Ovary (tissue), 10 donors: ENCODE measurements at regions of chr3 and their contacts with region 1.

Region 1: DNA sequence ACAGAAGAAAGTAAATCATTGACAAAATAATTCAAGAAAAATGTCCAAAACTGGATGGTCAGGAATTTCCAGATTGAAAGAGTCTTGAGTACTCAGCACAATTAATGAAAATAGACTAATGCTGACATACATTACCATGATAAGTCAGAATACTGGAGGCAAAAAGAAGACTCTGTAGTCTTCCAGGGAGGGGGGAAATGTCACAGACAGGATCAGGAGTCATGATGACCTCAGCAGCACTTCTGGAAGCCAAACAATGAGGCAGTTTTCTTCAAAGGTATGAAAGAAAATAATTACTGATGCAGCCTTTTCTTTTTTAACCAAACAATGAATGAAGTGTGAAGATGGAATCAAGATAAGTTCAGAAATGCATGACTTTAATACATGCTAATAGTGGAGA is 30.1 kb upstream of the SLC22A13 start:
- DNase-seq: no peak
- H3K4me3 ChIP-seq: no peak overlapping the region
- H3K27ac ChIP-seq: no peak overlapping the region
- H3K4me1 ChIP-seq: no peaks in the 10 kb centered on the region
- H3K27me3 ChIP-seq: no peaks in the 10 kb centered on the region
- CTCF ChIP-seq: no peak
- EP300 ChIP-seq: no peak
- POLR2A ChIP-seq: no peak

Region 2: DNA sequence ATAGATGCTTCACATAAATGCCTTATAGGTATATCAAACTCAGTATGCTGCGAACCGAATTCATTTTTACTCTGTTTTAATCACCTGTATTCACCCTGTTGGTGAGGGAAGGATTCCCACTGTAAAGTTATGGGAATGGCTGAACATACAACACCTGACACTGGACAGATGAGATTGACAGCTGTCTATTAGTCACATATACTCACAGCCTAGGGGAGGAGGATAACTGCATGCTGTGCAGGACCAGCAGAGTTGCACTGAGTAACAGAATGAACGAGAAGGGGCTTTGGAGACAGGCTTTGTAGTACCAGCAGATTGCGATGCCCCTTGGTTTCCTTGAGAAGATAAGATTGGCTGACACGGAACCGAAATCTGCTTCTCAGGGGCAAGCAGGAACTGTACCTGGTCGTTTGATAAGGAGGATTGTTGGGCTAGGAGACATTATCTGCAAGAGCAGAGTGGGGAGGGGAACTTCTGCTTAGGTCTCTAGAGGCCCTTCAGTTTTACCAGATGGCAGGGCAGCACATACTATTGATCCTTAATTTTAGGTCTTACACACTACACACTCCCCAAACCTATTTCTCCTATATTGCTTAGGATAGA is 13.3 kb before region 1 on chr3:
- intact Hi-C with region 1: loop called in 1 of 4 experiments (anchors 2 kb)
- DNase-seq: no peak
- H3K4me3 ChIP-seq: no peak overlapping the region
- H3K27ac ChIP-seq: no peak overlapping the region
- H3K4me1 ChIP-seq: no peaks in the 10 kb centered on the region
- H3K27me3 ChIP-seq: no peaks in the 10 kb centered on the region
- CTCF ChIP-seq: no peak
- EP300 ChIP-seq: no peak
- POLR2A ChIP-seq: no peak